Panc1 (cell line): ENCODE measurements at regions of chr3 and their contacts with region 1.

Region 1: DNA sequence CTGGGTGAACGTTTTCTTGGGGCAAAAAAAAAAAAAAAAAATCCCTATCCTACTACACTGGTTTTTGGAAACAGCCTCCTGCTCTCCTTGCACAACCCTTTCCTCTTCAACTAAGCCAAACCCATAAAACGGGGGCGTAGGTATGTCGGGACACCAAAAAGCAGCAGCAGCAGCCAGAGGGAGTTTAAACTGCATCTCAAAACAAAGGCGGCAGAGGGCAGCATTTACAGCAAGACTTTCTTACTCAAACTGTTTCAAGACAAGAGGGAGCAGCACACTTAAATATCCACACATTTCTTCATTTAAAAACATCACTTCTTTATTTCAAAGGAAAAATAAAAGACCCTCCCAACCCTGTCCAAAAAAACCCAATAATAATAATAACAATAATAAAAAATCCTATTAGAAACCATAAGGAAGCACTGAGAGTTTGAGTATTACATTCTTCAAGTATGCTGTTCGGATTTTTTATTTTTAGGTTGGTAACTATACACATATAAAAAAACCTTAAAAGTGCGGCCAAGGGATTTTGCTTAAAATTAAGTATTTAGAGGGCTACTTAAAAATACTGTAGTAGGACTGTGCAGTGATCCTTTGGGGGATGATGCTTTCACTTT is 43.9 kb upstream of the PLXND1 start:
- DNase-seq: peak; percentile 52
- ATAC-seq: peak; percentile 81
- H3K4me3 ChIP-seq: no peak overlapping the region
- H3K27ac ChIP-seq: no peak overlapping the region
- H3K4me1 ChIP-seq: peaks cover 20% of the 10 kb centered on the region
- H3K27me3 ChIP-seq: no peaks in the 10 kb centered on the region
- CTCF ChIP-seq: peak; percentile 89

Region 2: DNA sequence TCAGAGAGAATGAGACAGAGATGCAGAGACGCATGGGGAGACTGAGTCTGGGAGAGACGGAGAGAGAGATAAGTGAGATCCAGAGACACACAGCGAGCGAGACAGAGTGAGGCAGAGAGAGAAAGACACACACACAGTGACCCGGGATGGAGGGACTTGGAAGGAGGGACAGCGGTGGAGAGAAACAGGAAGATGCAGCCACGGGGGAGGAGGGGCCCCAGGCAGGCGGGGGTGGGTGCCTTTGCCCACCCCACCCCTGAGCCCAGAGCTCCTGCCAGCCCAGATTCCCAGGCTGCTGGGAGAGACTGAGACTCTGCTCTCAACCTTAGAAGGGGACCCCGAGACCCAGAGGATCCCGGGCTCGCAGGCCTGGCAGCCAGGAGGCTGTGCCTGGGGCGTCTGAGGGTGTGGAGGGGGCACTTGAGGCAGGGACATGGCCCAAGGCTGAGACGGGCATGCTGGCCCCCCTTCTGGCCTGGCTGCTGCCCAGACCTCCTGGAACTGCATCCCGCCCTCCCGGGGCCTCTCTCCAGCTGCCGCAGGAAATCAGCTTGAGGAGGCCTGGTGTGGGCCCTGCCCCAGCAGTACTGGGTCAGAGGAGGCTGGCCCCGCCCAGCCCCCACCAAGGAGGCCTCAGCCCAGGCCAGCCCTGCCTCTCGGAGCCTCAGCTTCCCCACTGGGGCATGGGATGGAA is 89.3 kb before region 1 on chr3:
- CTCF ChIA-PET with region 1: no interaction called
- POLR2A ChIA-PET with region 1: no interaction called
- in situ Hi-C with region 1: no loop called
- intact Hi-C with region 1: no loop called
- DNase-seq: no peak
- ATAC-seq: peak; percentile 55
- H3K4me3 ChIP-seq: no peak overlapping the region
- H3K27ac ChIP-seq: peak overlapping the region; percentile 11; the same call in 1 of the 2 replicates
- H3K4me1 ChIP-seq: peaks cover 19% of the 10 kb centered on the region
- H3K27me3 ChIP-seq: no peaks in the 10 kb centered on the region
- CTCF ChIP-seq: no peak

Region 3: DNA sequence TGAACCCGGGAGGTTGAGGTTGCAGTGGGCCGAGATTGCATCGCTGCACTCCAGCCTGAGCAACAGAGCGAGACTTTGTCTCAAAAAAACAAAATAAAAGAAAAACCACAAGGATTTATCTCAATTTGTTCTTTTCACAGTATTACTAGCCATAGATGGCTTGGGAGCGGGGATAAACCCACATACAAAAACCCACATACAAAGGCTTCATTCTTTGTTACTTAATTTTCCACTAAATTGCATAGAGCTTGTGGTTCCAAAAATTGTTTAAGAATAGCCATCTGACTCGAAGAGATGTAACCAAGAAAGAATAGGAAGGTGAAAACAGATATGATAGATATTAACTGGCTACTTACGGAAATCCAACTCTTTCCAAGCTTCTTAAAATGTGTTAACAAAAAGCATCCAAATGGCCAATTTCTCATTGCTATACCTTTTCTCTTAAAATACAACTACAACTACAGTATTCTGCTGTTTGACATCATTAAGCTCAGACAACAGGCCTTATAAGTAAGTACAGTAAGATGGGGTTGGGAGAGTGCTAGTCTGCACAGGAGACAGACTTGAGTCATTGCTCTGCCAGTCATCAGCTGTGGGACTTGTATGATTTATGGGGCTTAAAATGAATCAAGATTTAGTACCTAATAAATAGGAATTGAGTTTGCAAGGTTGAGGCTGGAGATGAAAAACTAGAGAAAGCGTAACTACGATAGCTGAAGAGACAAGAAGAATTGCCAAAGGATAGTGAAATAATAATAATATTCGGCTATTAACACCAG is 52.8 kb after region 1 on chr3:
- CTCF ChIA-PET with region 1: no interaction called
- POLR2A ChIA-PET with region 1: no interaction called
- in situ Hi-C with region 1: no loop called
- intact Hi-C with region 1: no loop called
- DNase-seq: no peak
- ATAC-seq: no peak
- H3K4me3 ChIP-seq: no peak overlapping the region
- H3K27ac ChIP-seq: no peak overlapping the region
- H3K4me1 ChIP-seq: no peaks in the 10 kb centered on the region
- H3K27me3 ChIP-seq: no peaks in the 10 kb centered on the region
- CTCF ChIP-seq: no peak

Region 4: DNA sequence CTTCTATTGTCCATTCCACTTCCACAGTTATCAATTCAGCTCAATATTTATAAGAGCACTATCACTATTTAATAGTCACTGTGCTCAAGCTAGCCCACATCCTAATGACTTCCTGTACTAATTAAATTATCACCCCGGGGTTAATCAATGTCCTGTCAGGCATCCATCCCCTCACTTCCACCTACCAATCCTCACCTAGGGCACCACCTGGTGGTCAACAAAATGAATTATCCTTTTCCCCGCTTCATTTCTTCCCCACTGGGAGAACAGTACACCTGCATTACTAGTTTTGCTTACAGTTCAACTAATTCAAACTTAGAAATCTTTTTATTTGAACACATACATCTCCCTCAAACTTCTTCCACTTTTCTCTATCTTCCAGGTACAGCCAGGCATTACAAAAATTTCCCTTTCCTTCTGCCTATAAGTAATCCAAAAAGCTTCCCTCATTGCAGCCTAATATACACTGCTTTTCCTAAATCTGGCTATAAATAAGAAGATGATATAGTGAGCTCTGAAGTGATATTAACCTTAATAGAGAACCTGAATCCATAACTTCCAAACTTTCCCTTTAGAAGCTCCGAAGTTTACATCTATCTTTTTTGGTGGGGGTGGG is 174.7 kb after region 1 on chr3:
- CTCF ChIA-PET with region 1: interaction called, 3 read pairs
- POLR2A ChIA-PET with region 1: no interaction called
- in situ Hi-C with region 1: loop called (anchors 25 kb)
- intact Hi-C with region 1: loop called (anchors 1 kb)
- DNase-seq: peak; percentile 47
- ATAC-seq: peak; percentile 87
- H3K4me3 ChIP-seq: no peak overlapping the region
- H3K27ac ChIP-seq: no peak overlapping the region
- H3K4me1 ChIP-seq: no peaks in the 10 kb centered on the region
- H3K27me3 ChIP-seq: no peaks in the 10 kb centered on the region
- CTCF ChIP-seq: peak; percentile 87

Region 5: DNA sequence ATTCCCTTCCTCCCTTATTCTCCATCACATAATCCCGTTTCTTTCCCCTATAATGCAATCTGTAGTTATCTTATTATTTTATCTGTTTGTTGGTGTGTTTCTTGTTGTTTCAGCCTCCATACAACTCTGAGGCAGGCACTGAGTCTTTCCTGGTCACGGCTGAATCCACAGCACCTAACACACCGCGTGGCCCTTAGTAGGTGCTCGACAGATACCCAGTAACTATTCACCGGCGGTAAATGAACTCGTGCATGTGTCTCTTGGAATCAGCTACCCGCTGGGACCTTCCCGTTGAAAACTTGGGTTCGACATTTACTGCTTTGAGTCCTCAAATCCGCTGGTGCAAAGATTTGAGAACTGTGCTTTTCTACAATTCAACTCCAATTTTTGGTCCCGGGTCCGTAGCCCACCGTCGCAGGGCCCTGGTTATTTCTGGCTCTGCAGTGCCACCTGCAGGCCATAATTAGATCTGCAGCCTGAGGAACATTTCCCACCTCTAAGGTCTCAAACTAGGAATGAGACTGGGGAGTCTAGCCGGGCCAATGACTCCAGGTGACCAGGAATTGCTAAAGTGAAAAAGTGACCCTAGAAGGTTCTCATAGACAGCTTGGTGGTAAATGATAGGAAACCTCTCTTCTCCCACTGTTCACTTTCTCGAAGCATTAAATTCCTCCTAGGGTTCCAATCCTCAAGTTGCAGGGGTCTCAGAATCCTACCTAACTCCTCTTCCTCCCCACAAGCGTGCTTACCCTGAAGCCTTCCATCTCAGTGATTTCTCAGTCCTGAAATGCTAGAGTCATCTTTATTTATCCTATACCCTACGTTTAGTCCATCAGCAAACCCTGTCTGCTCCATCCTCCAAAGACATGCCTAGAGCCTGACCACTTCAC is 284.1 kb after region 1 on chr3:
- CTCF ChIA-PET with region 1: no interaction called
- POLR2A ChIA-PET with region 1: no interaction called
- in situ Hi-C with region 1: no loop called
- intact Hi-C with region 1: loop called (anchors 2 kb)
- DNase-seq: peak; percentile 35
- ATAC-seq: peak; percentile 75
- H3K4me3 ChIP-seq: peak overlapping the region; percentile 34 to 69
- H3K27ac ChIP-seq: no peak overlapping the region
- H3K4me1 ChIP-seq: no peaks in the 10 kb centered on the region
- H3K27me3 ChIP-seq: no peaks in the 10 kb centered on the region
- CTCF ChIP-seq: peak; percentile 97